K562 (cell line): ENCODE measurements at regions of chr19 and their contacts with region 1.

Region 1: DNA sequence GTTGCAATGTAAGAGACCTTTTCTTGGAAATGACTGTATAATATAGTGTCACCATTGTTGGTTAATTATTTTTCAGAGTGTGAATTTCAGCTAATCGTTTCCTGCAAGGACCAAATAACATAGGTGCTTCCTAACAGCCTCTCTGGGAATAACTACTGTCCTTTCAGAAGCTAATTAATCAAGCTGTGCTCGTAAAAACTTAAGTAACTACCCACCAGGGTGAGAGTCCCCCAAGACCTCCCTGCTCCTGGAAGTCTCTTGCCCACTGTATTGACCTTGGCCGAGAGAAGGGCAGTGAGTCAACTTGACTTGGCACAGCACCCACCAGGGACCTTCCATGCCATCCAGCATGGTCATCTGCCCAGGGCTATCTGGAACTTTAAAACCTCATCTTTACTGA is 50.3 kb downstream of the UQCRFS1 start:
- DNase-seq: no peak
- ATAC-seq: no peak
- H3K4me3 ChIP-seq: no peak overlapping the region
- H3K27ac ChIP-seq: no peak overlapping the region
- H3K4me1 ChIP-seq: no peaks in the 10 kb centered on the region
- H3K27me3 ChIP-seq: no peaks in the 10 kb centered on the region
- CTCF ChIP-seq: no peak
- EP300 ChIP-seq: no peak
- POLR2A ChIP-seq: no peak
- RAD21 ChIP-seq: no peak

Region 2: DNA sequence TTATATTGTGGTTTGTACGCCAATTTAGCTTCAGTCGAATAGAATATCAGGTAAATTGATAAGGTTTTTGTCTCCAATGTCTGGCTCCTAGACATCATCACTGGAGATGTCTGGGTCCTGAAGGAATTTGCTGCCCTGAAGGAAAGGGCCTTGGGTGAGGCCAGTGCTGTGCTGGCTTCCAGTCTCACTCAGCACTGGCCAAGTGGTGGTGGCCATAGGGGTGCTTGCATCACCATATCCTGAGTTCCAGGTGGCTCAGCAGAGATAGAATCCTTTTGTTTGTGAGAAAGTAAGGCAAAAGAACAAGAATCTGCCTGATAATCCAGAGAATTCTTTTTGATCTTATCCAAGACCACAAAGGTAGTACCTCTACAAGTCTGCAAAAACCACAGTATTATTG is 11.2 kb after region 1 on chr19:
- CTCF ChIA-PET with region 1: no interaction called
- POLR2A ChIA-PET with region 1: no interaction called
- in situ Hi-C with region 1: no loop called
- intact Hi-C with region 1: no loop called
- DNase-seq: no peak
- ATAC-seq: no peak
- H3K4me3 ChIP-seq: no peak overlapping the region
- H3K27ac ChIP-seq: no peak overlapping the region
- H3K4me1 ChIP-seq: no peaks in the 10 kb centered on the region
- H3K27me3 ChIP-seq: no peaks in the 10 kb centered on the region
- CTCF ChIP-seq: no peak
- EP300 ChIP-seq: no peak
- POLR2A ChIP-seq: no peak
- RAD21 ChIP-seq: no peak

Region 3: DNA sequence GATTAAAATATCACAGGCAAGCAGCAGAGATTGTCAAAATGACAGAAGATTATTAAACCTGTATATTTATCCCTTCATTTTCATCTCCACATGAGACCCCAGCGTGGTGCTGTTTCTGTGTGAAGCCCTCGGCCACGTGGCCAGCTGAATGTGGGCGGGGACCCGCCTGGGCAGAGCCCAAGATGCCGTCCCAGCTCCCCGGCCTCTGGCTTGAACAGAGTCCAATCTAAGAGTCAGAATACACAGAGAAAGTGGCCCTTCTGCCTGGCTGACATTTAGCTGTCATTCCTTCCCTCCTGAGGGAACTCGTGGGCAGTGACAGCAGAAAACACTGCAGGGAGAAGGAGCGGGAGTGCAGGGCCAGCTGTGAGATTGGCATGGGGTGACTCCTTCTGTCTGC is 85.2 kb after region 1 on chr19:
- CTCF ChIA-PET with region 1: no interaction called
- POLR2A ChIA-PET with region 1: no interaction called
- in situ Hi-C with region 1: no loop called
- intact Hi-C with region 1: loop called (anchors 10 kb)
- DNase-seq: peak in 2 of 4 experiments; percentile 14 to 19
- ATAC-seq: 0 out of 3 replicates have a peak, but pooled peaks have one; percentile 42
- H3K4me3 ChIP-seq: no peak overlapping the region
- H3K27ac ChIP-seq: no peak overlapping the region
- H3K4me1 ChIP-seq: no peaks in the 10 kb centered on the region
- H3K27me3 ChIP-seq: peaks cover 12 to 34% of the 10 kb centered on the region in 2 experiments
- CTCF ChIP-seq: no peak
- EP300 ChIP-seq: no peak
- POLR2A ChIP-seq: no peak
- RAD21 ChIP-seq: no peak